Testis (tissue), 5 donors: ENCODE measurements at regions of chr14 and their contacts with region 1.

Region 1: DNA sequence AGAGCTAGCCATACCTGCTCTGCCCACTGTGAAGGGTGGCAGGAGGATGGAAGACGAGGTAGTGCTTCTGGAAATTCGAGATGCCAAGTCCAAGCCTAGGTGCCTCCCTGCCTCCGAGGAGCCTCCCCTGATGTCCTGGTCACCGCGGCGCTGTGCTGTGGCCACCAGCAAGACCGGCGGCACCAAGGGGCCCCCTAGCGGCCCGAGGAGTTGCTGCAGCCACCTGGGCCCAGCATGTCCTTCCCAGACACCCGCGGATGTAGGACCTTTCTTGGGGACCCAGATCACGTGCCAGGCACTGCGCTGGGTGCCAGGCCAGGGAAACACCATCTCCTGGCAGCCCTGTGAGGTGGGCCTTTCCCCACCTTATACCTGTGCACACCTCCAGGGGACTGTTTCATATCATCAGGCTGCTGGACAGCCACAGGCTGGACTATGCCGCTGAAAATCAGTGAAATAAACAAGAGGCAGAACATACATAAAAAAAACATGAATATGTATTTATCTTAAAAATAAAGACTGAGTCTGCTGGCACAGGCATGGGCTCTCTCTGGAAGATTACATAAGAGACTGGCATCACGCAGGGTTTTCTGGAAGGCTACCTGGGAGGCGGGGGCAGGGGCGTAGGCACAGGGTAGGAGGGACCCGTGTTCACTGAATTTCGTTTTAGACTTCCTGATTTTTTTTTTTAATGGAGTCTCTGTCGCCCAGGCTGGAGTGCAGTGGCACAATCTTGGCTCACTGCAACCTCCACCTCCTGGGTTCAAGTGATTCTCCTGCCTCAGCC is 15.9 kb upstream of the HHIPL1 start:
- DNase-seq: peak; percentile 83
- H3K4me3 ChIP-seq: no peak overlapping the region
- H3K27ac ChIP-seq: no peak overlapping the region
- H3K4me1 ChIP-seq: no peaks in the 10 kb centered on the region
- H3K27me3 ChIP-seq: no peaks in the 10 kb centered on the region
- CTCF ChIP-seq: peak; percentile 81 to 95 (median 93)
- POLR2A ChIP-seq: no peak

Region 2: GRCh38 chr14:99518441-99519346 is 110.3 kb before region 1 on chr14:
- intact Hi-C with region 1: loop called (anchors 2 kb)
- DNase-seq: peak; percentile 77
- H3K4me3 ChIP-seq: no peak overlapping the region
- H3K27ac ChIP-seq: no peak overlapping the region
- H3K4me1 ChIP-seq: peaks cover 22% of the 10 kb centered on the region
- H3K27me3 ChIP-seq: no peaks in the 10 kb centered on the region
- CTCF ChIP-seq: peak; percentile 91 to 98 (median 95)
- POLR2A ChIP-seq: no peak